ENCODE measurements at regions of chr1 and their contacts with region 1.

Region 1: GRCh38 chr1:222713091-222713961 is 962 bp downstream of the BROX start:
- DNase-seq: peak; percentile 90
- ATAC-seq: peak; percentile 73
- H3K4me3 Mint-ChIP-seq: peak overlapping the region; percentile 93
- H3K27ac Mint-ChIP-seq: peak overlapping the region; percentile 100
- H3K4me1 Mint-ChIP-seq: peaks cover 54% of the 10 kb centered on the region
- H3K27me3 Mint-ChIP-seq: no peaks in the 10 kb centered on the region
- CTCF ChIP-seq: no peak

Region 2: DNA sequence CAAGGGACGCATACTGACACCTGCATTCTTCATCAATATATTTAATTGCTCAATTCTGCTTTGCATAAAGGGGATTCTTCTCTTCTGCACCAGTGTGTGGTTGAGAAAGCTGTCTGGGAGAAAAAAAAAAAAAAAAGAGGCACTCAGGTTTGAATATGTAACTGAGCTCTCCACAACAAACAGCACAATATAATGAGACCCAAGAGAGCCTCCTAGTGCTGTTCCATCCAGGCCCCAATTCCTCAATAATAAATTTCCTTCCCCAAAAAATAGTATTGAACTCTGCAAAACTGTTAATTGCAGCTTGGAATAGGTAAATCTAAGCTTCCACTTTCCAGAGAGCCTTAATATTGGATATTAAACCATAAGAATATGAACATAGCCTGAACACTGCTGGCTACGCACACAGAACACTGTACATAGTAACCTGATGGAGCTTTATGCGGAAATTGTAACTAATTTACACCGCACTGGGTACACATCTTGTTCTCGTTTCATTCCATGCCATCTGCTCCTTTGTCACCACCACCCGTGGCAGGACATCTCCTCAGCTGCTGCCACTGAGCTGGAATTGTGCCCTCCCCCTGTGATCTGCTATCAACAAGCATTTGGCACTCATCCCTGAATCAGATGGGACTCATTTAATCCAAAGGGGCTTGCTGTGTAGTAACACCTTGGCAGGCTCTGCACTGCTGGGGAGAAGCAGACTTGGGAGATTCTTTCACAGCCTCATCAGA is 437.4 kb before region 1 on chr1:
- CTCF ChIA-PET with region 1: no interaction called
- POLR2A ChIA-PET with region 1: no interaction called
- intact Hi-C with region 1: no loop called
- DNase-seq: no peak
- ATAC-seq: no peak
- H3K4me3 Mint-ChIP-seq: no peak overlapping the region
- H3K27ac Mint-ChIP-seq: no peak overlapping the region
- H3K4me1 Mint-ChIP-seq: no peaks in the 10 kb centered on the region
- H3K27me3 Mint-ChIP-seq: peaks cover 3% of the 10 kb centered on the region
- CTCF ChIP-seq: no peak

Region 3: GRCh38 chr1:222465211-222466041 is 247.9 kb before region 1 on chr1:
- CTCF ChIA-PET with region 1: interaction called, 3 read pairs
- POLR2A ChIA-PET with region 1: interaction called, 5 read pairs
- intact Hi-C with region 1: loop called (anchors 1 kb)
- DNase-seq: peak; percentile 89
- ATAC-seq: peak; percentile 93
- H3K4me3 Mint-ChIP-seq: peak overlapping the region; percentile 92
- H3K27ac Mint-ChIP-seq: peak overlapping the region; percentile 98
- H3K4me1 Mint-ChIP-seq: peaks cover 13% of the 10 kb centered on the region
- H3K27me3 Mint-ChIP-seq: peaks cover 6% of the 10 kb centered on the region
- CTCF ChIP-seq: peak; percentile 100

Region 4: DNA sequence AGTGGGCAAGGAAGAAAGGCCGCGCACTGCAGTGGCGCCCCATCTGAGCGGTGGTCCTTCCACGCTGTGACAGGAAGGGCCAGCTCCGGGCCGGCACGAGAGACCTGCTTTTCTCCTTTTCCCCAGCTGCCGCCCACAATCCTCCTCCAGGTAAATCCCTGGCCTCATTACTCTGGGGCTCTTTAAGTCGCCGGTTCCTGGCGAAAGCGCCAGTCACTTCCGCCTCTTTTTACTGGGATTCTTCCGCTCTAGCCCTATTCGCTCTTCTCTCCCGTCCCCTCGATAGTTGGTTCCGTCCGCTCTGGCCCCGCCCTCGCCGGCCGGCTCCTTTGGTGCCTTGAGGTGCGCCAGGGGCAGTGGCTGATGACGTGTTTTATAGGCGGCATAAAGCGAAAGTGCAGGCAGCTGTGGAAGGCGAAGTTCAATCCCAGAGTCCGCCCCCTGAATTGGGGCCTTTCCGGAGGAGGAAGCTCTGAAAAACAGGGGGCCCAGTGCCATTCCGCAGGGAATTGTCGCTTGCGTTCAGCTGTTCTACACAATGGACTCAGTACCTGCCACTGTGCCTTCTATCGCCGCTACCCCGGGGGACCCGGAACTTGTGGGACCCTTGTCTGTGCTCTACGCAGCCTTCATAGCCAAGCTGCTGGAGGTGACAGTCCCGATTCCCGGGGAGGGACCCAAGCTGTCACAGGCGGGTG is 69.2 kb before region 1 on chr1:
- CTCF ChIA-PET with region 1: interaction called, 3 read pairs
- POLR2A ChIA-PET with region 1: interaction called, 49 read pairs
- intact Hi-C with region 1: loop called (anchors 1 kb)
- DNase-seq: peak; percentile 94
- ATAC-seq: peak; percentile 96
- H3K4me3 Mint-ChIP-seq: peak overlapping the region; percentile 100
- H3K27ac Mint-ChIP-seq: peak overlapping the region; percentile 99
- H3K4me1 Mint-ChIP-seq: peaks cover 25% of the 10 kb centered on the region
- H3K27me3 Mint-ChIP-seq: no peaks in the 10 kb centered on the region
- CTCF ChIP-seq: no peak

Region 5: DNA sequence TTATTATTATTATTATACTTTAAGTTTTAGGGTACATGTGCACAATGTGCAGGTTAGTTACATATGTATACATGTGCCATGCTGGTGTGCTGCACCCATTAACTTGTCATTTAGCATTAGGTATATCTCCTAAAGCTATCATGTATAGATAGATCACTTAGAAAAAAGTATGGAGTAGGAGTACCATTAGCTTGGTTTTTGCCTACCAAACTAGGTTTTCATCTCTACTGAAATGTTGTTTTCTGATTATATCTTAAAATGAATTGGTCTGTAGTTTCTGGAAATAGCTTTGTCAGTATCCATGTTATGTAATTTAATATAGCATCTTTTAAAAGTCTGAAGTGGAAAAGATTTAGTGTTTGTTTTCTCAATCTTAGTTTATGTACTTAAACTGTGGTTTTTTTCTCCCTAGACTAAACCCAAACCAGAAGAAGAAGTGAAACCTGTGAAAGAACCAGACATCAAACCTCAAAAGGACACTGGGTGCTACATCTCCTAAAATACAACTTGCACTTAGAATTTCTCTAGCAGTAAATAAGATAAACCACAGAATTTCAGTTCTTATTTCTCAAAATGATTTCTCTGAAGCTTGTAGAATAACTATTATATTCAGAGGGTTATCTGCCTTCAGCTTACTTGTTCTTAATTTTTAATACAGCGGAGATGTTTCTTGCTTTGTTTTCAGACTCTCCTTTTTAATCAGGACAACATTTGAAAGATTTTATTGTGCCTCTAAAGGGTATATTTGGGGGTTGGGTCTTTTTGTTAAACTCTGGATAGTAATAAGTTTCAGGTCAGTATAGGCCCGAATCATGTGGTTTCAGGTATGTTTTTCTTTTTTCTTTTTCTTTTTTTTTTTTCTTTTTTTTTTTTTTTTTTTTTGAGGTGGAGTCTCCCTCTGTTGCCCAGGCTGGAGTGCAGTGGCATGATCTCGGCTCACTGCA is 19.2 kb after region 1 on chr1:
- CTCF ChIA-PET with region 1: interaction called, 3 read pairs
- POLR2A ChIA-PET with region 1: interaction called, 127 read pairs
- intact Hi-C with region 1: loop called (anchors 1 kb)
- DNase-seq: no peak
- ATAC-seq: peak; percentile 88
- H3K4me3 Mint-ChIP-seq: peak overlapping the region; percentile 77
- H3K27ac Mint-ChIP-seq: peak overlapping the region; percentile 95
- H3K4me1 Mint-ChIP-seq: peaks cover 64% of the 10 kb centered on the region
- H3K27me3 Mint-ChIP-seq: no peaks in the 10 kb centered on the region
- CTCF ChIP-seq: no peak

Region 6: GRCh38 chr1:222772996-222773379 is 59.7 kb after region 1 on chr1:
- CTCF ChIA-PET with region 1: no interaction called
- POLR2A ChIA-PET with region 1: interaction called, 9 read pairs
- intact Hi-C with region 1: loop called (anchors 1 kb)
- DNase-seq: peak; percentile 33
- ATAC-seq: peak; percentile 66
- H3K4me3 Mint-ChIP-seq: peak overlapping the region; percentile 57
- H3K27ac Mint-ChIP-seq: peak overlapping the region; percentile 89
- H3K4me1 Mint-ChIP-seq: peaks cover 49% of the 10 kb centered on the region
- H3K27me3 Mint-ChIP-seq: no peaks in the 10 kb centered on the region
- CTCF ChIP-seq: no peak

Region 7: DNA sequence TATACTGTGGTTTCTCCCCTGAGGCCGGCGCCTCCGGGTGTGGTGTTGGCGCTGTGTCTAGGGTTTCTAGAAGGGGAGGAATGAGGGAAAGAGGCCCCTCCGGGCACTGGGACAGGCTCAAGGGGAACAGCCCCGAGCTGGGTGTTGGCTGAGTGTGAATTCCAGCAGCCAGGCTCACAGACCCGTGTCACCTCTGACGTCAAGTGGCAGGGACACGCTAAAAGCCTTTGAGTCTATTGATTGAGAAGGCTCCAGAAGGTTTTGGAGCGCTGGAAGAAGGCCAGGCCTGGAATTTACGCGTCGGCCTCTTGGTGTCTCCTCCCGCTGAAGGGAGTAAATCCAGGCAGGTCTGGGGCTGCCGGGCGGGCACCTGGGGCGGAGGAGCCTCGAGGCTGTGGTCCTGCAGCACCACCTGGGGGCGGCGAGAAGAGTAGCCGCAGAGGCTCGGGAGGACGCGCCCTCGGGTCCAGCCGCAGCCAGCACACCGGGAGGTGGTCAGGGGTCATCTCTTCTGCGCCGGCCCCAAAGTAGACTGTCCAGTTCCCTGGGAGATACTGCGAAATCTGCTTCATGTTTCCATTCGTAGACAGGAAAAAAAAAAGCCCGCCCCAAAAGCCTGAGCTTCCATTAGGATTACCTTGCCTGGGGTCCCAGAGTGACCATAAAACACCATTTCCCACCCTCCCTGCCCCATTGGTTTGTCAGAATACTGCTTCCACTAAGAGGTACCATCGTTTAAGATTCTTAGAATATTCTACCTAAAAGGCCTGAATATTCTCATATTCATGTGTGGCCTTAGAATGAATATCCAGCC is 368.1 kb after region 1 on chr1:
- CTCF ChIA-PET with region 1: interaction called, 3 read pairs
- POLR2A ChIA-PET with region 1: interaction called, 5 read pairs
- intact Hi-C with region 1: loop called (anchors 1 kb)
- DNase-seq: peak; percentile 71
- ATAC-seq: peak; percentile 99
- H3K4me3 Mint-ChIP-seq: peak overlapping the region; percentile 83
- H3K27ac Mint-ChIP-seq: peak overlapping the region; percentile 80
- H3K4me1 Mint-ChIP-seq: peaks cover 3% of the 10 kb centered on the region
- H3K27me3 Mint-ChIP-seq: peaks cover 5% of the 10 kb centered on the region
- CTCF ChIP-seq: peak; percentile 92